ENCODE measurements at regions of chr1 and their contacts with region 1.

Region 1: DNA sequence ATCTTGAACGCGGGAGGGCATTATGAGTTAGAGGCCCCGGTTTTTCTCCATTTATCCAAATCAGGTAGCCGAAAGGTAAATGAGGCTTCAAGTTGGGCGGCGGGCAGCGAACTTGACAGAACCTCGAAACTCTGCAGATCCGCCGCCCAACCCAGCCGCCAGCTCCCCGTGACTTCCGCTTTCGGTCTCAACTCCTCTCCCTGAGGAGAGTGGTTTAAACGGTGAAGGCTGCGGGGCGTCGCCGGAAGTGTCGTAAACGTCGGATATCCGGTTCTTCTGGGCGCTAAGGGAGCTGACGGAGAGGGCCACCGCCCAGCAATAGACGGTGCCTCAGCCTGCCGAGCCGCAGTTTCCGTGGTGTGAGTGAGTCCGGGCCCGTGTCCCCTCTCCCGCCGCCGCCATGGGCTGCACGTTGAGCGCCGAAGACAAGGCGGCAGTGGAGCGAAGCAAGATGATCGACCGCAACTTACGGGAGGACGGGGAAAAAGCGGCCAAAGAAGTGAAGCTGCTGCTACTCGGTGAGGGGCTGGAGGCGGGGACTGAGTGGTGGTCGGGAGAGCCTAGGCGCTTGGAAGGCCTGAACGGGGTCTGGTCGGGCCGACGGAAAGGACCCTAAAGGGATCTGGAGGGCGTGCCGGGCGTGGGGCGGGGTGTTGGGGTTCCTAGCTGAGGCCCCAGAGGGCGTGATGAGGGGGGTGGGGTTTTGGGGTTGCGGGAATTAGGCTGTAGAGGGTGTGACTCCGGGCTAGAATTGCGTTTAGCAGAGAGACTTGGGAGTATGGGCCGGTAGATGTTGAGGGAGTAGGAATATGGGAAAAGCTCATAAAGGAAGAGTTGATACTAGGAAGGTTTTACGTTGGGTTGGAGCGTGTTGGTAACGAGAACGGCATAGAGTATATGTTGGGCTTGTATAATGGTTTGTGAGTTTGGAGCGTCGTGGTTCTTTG is at the start of gene GNAI3:
- DNase-seq: peak; percentile 97
- H3K4me3 ChIP-seq: peak within 1 kb of the TSS; percentile 85
- H3K27ac ChIP-seq: peak within 1 kb of the TSS; percentile 79
- H3K4me1 ChIP-seq: peaks cover 25% of the 10 kb centered on the region
- CTCF ChIP-seq: no peak; the same call in 1 of the 2 replicates
- total RNA-seq, gene GNAI3: 3.8 and 4.1 TPM in 2 replicates

Region 2: GRCh38 chr1:109454497-109455133 is 94.0 kb before region 1 on chr1:
- CTCF ChIA-PET with region 1: no interaction called
- POLR2A ChIA-PET with region 1: no interaction called
- intact Hi-C with region 1: no loop called
- DNase-seq: peak; percentile 19
- H3K4me3 ChIP-seq: no peak overlapping the region
- H3K27ac ChIP-seq: no peak overlapping the region
- H3K4me1 ChIP-seq: no peaks in the 10 kb centered on the region
- CTCF ChIP-seq: no peak

Region 3: DNA sequence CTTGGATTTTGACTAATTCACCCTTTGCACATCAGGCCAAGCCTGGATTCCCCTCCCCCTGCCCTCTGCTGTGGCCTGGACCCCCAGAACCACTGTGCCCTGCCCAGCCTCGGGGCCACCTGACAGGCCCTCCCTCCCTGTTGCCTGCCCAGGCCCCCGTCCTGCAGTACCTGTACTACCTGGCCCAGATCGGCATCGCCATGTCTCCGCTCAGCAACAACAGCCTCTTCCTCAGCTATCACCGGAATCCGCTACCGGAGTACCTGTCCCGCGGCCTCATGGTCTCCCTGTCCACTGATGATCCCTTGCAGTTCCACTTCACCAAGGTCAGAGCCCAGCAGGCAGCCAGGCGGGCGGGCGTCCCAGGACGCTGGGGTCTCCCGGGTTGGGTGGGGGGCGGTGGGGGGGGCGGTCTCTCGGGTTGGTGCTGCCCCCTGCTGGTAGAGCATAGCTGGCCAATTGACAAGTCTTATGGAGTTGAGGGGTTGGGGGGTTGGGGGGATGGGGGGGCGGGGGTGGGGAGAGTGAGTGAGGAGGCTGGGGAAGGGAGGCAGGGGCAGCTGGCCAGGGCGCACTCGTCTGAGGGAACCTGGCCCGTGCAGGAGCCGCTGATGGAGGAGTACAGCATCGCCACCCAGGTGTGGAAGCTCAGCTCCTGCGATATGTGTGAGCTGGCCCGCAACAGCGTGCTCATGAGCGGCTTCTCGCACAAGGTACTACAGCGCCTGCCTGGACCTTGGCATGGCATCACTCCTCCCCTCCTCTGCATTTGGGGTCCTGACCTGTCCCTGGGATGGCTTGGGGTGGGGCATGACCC is 81.7 kb after region 1 on chr1:
- CTCF ChIA-PET with region 1: interaction called, 6 read pairs
- POLR2A ChIA-PET with region 1: interaction called, 5 read pairs
- intact Hi-C with region 1: loop called (anchors 1 kb)
- DNase-seq: peak; percentile 41
- H3K4me3 ChIP-seq: no peak overlapping the region
- H3K27ac ChIP-seq: no peak overlapping the region
- H3K4me1 ChIP-seq: peaks cover 12% of the 10 kb centered on the region
- CTCF ChIP-seq: 0 out of 2 replicates have a peak, but pooled peaks have one; percentile 20